ENCODE measurements at regions of chr12 and their contacts with region 1.

Region 1: GRCh38 chr12:11780521-11781101 is 131.1 kb downstream of the ETV6 start:
- DNase-seq: no peak
- ATAC-seq: no peak
- H3K4me3 ChIP-seq: no peak overlapping the region
- H3K27ac ChIP-seq: peak overlapping the region in 2 of 4 donors; percentile 58 to 60
- H3K4me1 ChIP-seq: peaks cover 46 to 48% of the 10 kb centered on the region in 2 donors
- H3K27me3 ChIP-seq: no peaks in the 10 kb centered on the region
- CTCF ChIP-seq: no peak
- POLR2A ChIP-seq: no peak

Region 2: DNA sequence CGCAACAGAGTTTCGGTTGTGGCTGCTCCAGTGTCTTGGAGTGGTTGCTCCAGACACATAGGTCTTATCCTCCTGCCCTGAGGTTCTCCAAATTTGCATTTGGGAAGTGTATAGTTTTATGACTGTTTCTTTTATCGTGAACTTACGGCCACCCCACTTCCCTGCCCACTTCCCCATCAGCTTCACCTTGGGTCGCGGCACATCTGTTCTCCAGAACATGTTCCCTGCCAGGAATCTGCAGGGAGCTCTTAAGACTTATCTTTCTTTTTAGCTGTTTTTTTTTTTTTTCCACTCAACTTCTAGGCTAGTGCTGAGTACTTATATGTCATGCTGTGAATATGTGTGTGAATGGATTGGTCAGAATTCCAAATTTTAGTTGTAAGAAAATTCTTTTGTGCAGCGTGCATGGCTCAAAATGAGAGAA is 55.7 kb before region 1 on chr12:
- in situ Hi-C with region 1: no loop called
- intact Hi-C with region 1: loop called (anchors 2 kb)
- DNase-seq: no peak
- ATAC-seq: no peak
- H3K4me3 ChIP-seq: no peak overlapping the region
- H3K27ac ChIP-seq: peak overlapping the region in 3 of 4 donors; percentile 67 to 82 (median 74)
- H3K4me1 ChIP-seq: peaks cover 22 to 30% of the 10 kb centered on the region in 2 donors
- H3K27me3 ChIP-seq: no peaks in the 10 kb centered on the region
- CTCF ChIP-seq: no peak
- POLR2A ChIP-seq: no peak

Region 3: DNA sequence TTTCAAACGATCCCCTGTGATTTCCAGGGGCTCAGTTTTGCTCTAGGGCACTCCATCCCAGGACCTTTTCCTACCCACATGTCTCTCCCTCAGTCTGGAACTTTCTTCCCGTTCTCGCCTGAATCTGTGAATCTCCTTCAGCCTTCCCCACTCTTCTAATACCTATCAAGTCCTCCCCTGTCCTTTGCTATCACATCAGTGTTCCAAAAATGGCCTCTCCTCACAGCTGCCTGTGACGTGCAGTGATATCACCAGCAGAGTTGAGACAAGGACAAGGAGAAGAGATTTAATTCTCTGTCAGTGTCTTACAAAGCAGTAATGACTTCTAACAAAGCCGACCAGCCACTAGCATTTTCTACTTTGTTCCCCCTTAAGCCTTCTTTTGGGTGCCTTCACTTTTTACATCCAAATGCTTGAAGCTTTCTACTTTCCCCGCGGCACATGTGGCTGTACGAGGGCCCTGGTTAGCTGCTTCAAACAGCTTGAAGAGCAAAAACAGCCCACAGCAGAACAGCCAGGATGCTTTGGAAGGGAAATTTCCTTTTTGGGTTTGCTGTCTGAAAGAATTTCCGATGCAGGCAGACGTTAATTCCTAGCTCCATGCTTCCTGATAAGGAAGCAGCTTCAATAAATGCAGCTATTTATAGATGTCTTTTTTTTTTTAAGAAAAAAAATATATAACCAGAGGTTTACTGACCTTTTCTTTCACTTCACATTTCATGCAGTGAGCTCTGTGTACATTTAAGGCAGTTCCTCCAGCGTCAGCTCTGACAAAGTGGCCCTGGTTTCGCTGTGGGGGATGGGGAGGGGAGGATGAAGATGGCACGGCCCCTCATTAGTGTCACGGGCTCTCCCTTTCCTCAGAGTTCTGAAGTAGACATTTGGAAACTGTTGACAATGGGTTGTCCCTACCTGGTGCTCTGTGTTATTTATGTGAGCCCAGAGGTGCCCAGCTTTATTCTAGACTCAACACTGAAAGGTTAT is 21.8 kb before region 1 on chr12:
- in situ Hi-C with region 1: no loop called
- intact Hi-C with region 1: loop called (anchors 2 kb)
- DNase-seq: no peak
- ATAC-seq: peak; percentile 34 to 40
- H3K4me3 ChIP-seq: no peak overlapping the region
- H3K27ac ChIP-seq: peak overlapping the region; percentile 58 to 73 (median 67)
- H3K4me1 ChIP-seq: peaks cover 35 to 51% of the 10 kb centered on the region in 2 donors
- H3K27me3 ChIP-seq: no peaks in the 10 kb centered on the region
- CTCF ChIP-seq: no peak
- POLR2A ChIP-seq: no peak